AG04449 (cell line): ENCODE measurements at regions of chr3 and their contacts with region 1.

Region 1: GRCh38 chr3:50321336-50322114 is 1.0 kb downstream of the HYAL2 start:
- DNase-seq: no peak
- H3K4me3 ChIP-seq: peak overlapping the region; percentile 73
- CTCF ChIP-seq: peak; percentile 60

Region 2: GRCh38 chr3:50260027-50260941 is 61.2 kb before region 1 on chr3:
- CTCF ChIA-PET with region 1: interaction called, 14 read pairs
- POLR2A ChIA-PET with region 1: no interaction called
- DNase-seq: no peak
- H3K4me3 ChIP-seq: peak overlapping the region; percentile 57
- CTCF ChIP-seq: peak; percentile 94

Region 3: GRCh38 chr3:50298836-50299637 is 22.5 kb before region 1 on chr3 and contains the starts of genes HYAL3 and NAA80:
- CTCF ChIA-PET with region 1: interaction called, 11 read pairs
- POLR2A ChIA-PET with region 1: interaction called, 6 read pairs
- DNase-seq: peak; percentile 97
- H3K4me3 ChIP-seq: peak within 1 kb of the TSS; percentile 96
- CTCF ChIP-seq: peak; percentile 44

Region 4: GRCh38 chr3:50337191-50337841 is 15.8 kb after region 1 on chr3:
- CTCF ChIA-PET with region 1: interaction called, 37 read pairs
- POLR2A ChIA-PET with region 1: interaction called, 3 read pairs
- DNase-seq: peak; percentile 96
- H3K4me3 ChIP-seq: peak overlapping the region; percentile 92
- CTCF ChIP-seq: no peak